Vagina (tissue), 2 donors: ENCODE measurements at regions of chr20 and their contacts with region 1.

Region 1: DNA sequence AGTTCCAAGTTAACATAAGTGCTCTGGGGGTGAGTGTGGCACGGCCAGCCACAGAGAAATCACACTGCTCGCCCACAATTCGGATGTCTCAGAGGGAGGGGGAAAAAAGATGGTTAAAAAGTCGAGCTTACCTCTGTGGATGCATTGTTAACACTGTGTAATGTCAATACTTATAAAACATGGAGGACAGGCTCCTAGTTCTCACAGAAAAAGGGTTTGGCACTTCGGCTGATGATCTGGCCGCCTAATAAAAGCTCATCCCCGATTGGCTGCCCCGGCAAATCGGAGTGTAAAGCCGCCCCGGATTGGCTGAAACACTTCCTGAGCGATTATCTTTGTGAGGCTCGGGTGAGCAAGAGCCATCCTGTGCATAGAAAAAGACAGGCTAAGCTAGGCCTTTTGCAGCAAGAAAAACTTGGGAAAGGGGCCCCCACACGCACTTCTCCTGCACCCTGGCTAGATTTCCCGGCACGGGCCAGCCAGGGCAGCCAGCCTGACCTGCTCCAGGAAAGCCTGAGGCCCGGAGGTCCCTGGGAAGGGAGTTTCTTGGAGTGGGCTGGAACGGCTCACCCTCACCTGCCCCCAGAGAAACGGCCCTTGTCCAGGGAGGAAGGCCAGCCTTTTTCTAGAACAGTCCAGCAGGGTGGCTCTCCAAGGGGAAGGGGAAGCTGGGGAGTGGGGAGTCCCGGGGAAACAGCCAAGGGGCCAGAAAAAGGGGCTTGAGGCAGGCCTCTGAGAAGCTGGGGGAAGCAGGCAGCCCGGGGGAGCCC is at the start of gene ZMYND8:
- DNase-seq: peak; percentile 98
- H3K4me3 ChIP-seq: peak within 1 kb of the TSS; percentile 23 to 36
- H3K27ac ChIP-seq: peak within 1 kb of the TSS; percentile 99
- H3K4me1 ChIP-seq: peaks cover 100% of the 10 kb centered on the region
- H3K27me3 ChIP-seq: no peaks in the 10 kb centered on the region
- CTCF ChIP-seq: no peak
- POLR2A ChIP-seq: no peak
- total RNA-seq, gene ZMYND8: 91.1 TPM

Region 2: GRCh38 chr20:47038566-47039560 is 317.8 kb before region 1 on chr20:
- intact Hi-C with region 1: no loop called
- DNase-seq: no peak
- H3K4me3 ChIP-seq: no peak overlapping the region
- H3K27ac ChIP-seq: no peak overlapping the region
- H3K4me1 ChIP-seq: no peaks in the 10 kb centered on the region
- H3K27me3 ChIP-seq: no peaks in the 10 kb centered on the region
- CTCF ChIP-seq: no peak
- POLR2A ChIP-seq: no peak

Region 3: DNA sequence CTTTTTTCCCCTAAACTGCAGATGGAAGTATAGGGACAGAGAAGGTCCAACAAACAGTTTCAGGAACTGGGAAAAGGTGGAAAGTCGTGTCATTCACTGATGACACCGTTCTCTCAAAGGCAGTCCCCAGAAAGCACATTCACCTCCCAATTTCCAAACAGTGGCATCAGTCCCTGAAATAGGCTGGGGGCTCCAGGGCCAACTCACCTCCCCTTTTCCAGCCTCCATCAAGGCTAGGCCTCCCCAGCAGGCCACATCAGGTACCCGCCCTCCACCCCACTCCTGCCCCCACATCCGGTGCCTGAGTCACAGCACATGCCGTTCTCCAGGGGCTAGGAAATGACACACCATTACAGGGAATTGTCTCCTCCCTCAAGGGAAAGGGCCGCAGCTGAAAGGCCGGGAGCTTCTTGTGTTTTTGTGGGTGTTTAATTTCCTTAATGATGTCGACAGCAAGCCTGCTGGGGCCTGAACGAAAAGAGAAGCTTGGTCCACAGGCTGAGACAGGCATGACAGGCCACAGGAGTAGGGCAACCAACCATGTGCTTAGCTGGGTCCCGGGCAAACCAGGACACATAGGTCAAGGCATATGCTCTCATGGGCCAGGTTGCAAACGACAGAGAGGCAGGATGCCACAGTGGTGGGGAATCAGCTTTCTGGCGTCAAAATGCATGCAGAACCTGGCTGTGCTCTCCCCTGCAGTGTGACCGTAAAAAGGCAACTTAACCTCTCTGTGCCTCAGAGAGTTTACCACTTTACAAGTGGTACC is 39.4 kb before region 1 on chr20:
- intact Hi-C with region 1: loop called (anchors 2 kb)
- DNase-seq: peak; percentile 98
- H3K4me3 ChIP-seq: peak overlapping the region; percentile 17 to 19
- H3K27ac ChIP-seq: peak overlapping the region; percentile 99
- H3K4me1 ChIP-seq: peaks cover 84% of the 10 kb centered on the region
- H3K27me3 ChIP-seq: no peaks in the 10 kb centered on the region
- CTCF ChIP-seq: no peak
- POLR2A ChIP-seq: peak in 1 of 2 donors; percentile 28

Region 4: GRCh38 chr20:47453142-47453782 is 96.6 kb after region 1 on chr20:
- intact Hi-C with region 1: no loop called
- DNase-seq: no peak
- H3K4me3 ChIP-seq: no peak overlapping the region
- H3K27ac ChIP-seq: no peak overlapping the region
- H3K4me1 ChIP-seq: peaks cover 5% of the 10 kb centered on the region
- H3K27me3 ChIP-seq: no peaks in the 10 kb centered on the region
- CTCF ChIP-seq: no peak
- POLR2A ChIP-seq: no peak